ENCODE measurements at regions of chr1 and their contacts with region 1.

Region 1: GRCh38 chr1:243587823-243588560 is 262.1 kb downstream of the AKT3 start:
- DNase-seq: no peak
- H3K4me3 Mint-ChIP-seq: peak overlapping the region; percentile 3
- H3K27ac Mint-ChIP-seq: peak overlapping the region; percentile 41
- H3K4me1 Mint-ChIP-seq: peaks cover 20% of the 10 kb centered on the region
- H3K27me3 Mint-ChIP-seq: no peaks in the 10 kb centered on the region

Region 2: GRCh38 chr1:243421784-243422183 is 166.2 kb before region 1 on chr1:
- intact Hi-C with region 1: loop called (anchors 2 kb)
- DNase-seq: peak; percentile 52
- H3K4me3 Mint-ChIP-seq: peak overlapping the region; percentile 61
- H3K27ac Mint-ChIP-seq: peak overlapping the region; percentile 57
- H3K4me1 Mint-ChIP-seq: peaks cover 44% of the 10 kb centered on the region
- H3K27me3 Mint-ChIP-seq: no peaks in the 10 kb centered on the region

Region 3: DNA sequence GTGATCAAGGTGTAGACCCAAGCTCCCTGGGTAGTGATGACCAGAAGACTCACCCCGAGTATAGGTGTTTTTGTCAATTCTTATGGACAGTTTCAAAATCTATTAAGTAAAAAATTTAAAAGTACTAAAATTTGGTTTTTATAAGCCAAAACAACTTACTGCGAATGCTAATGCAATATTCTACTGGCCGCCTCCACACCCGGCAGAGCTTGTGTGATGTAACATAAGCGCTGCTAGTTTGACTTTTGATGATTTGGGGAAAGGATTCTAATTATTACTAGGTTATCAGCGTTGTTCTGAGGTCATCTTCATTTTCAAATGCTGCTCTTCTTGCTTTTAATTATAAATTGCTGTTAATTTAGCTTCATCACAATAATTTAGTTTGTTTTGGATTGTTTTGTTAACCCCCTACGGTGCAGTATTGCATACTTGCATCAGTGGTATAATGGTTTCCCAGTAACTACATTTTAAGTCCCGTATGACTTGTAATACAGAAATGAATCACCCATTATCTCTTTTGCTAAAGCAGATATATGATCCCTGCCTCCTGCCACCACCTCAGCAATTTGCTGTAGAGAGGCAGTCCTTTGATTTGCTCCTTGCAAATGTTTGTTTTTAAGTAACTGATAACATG is 154.1 kb before region 1 on chr1:
- intact Hi-C with region 1: no loop called
- DNase-seq: no peak
- H3K4me3 Mint-ChIP-seq: no peak overlapping the region
- H3K27ac Mint-ChIP-seq: no peak overlapping the region
- H3K4me1 Mint-ChIP-seq: no peaks in the 10 kb centered on the region
- H3K27me3 Mint-ChIP-seq: no peaks in the 10 kb centered on the region

Region 4: GRCh38 chr1:243513726-243514491 is 74.1 kb before region 1 on chr1:
- intact Hi-C with region 1: no loop called
- DNase-seq: no peak
- H3K4me3 Mint-ChIP-seq: no peak overlapping the region
- H3K27ac Mint-ChIP-seq: no peak overlapping the region
- H3K4me1 Mint-ChIP-seq: peaks cover 5% of the 10 kb centered on the region
- H3K27me3 Mint-ChIP-seq: peaks cover 1% of the 10 kb centered on the region

Region 5: GRCh38 chr1:243837907-243838535 is 250.0 kb after region 1 on chr1:
- intact Hi-C with region 1: loop called (anchors 2 kb)
- DNase-seq: no peak
- H3K4me3 Mint-ChIP-seq: peak overlapping the region; percentile 9
- H3K27ac Mint-ChIP-seq: peak overlapping the region; percentile 34
- H3K4me1 Mint-ChIP-seq: peaks cover 33% of the 10 kb centered on the region
- H3K27me3 Mint-ChIP-seq: no peaks in the 10 kb centered on the region

Measured in activated T-helper 1 cell treated with anti-CD3 and anti-CD28 coated beads, Interleukin-12 subunit alpha, Interleukin-12 subunit beta, Interleukin-2, Interleukin-4 antibody, amounts not matched to agents 30 ng/mL and 10 ng/mL and 1 ng/mL, durations not matched to agents 14 hours and 24 hours and 36 hours (primary cell).